HepG2 (cell line): ENCODE measurements at regions of chr17 and their contacts with region 1.

Region 1: GRCh38 chr17:7484067-7484918 is at the start of gene POLR2A:
- DNase-seq: peak; percentile 96
- ATAC-seq: peak; percentile 72
- H3K4me3 ChIP-seq: peak within 1 kb of the TSS; percentile 75 to 92 (median 90)
- H3K27ac ChIP-seq: peak within 1 kb of the TSS; percentile 100
- H3K4me1 ChIP-seq: peaks cover 65% of the 10 kb centered on the region
- H3K27me3 ChIP-seq: no peaks in the 10 kb centered on the region; a peak in 2 of 5 replicates
- CTCF ChIP-seq: no peak
- EP300 ChIP-seq: peak; percentile 44 to 51; a peak in 2 of 4 replicates
- POLR2A ChIP-seq: peak; percentile 100
- RAD21 ChIP-seq: peak; percentile 44; the same call in 1 of the 2 replicates
- total RNA-seq, gene POLR2A: 17.8 and 63.2 TPM in 2 replicates

Region 2: GRCh38 chr17:7435221-7435675 is 49.0 kb before region 1 on chr17 and contains the start of gene TMEM102:
- CTCF ChIA-PET with region 1: no interaction called
- POLR2A ChIA-PET with region 1: interaction called, 19 read pairs
- in situ Hi-C with region 1: loop called (anchors 5 kb)
- intact Hi-C with region 1: no loop called
- DNase-seq: peak; percentile 97
- ATAC-seq: peak; percentile 85
- H3K4me3 ChIP-seq: peak within 1 kb of the TSS; percentile 62 to 75 (median 72)
- H3K27ac ChIP-seq: peak within 1 kb of the TSS; percentile 13
- H3K4me1 ChIP-seq: peaks cover 24% of the 10 kb centered on the region
- H3K27me3 ChIP-seq: no peaks in the 10 kb centered on the region; a peak in 1 of 5 replicates
- CTCF ChIP-seq: 0 out of 2 replicates have a peak, but pooled peaks have one; percentile 6
- EP300 ChIP-seq: no peak
- POLR2A ChIP-seq: no peak
- RAD21 ChIP-seq: no peak
- total RNA-seq, gene TMEM102: 2.0 and 3.1 TPM in 2 replicates

Region 3: GRCh38 chr17:7444682-7445618 is 39.3 kb before region 1 on chr17 and contains the start of gene CHRNB1:
- CTCF ChIA-PET with region 1: no interaction called
- POLR2A ChIA-PET with region 1: interaction called, 21 read pairs
- in situ Hi-C with region 1: no loop called
- intact Hi-C with region 1: loop called (anchors 5 kb)
- DNase-seq: peak; percentile 85
- ATAC-seq: peak; percentile 87
- H3K4me3 ChIP-seq: peak within 1 kb of the TSS; percentile 62 to 85 (median 63)
- H3K27ac ChIP-seq: peak within 1 kb of the TSS; percentile 73
- H3K4me1 ChIP-seq: peaks cover 50% of the 10 kb centered on the region
- H3K27me3 ChIP-seq: peaks cover 6 to 27% of the 10 kb centered on the region in 2 experiments; a peak in 4 of 5 replicates
- CTCF ChIP-seq: peak; percentile 69
- EP300 ChIP-seq: 0 out of 4 replicates have a peak, but pooled peaks of 1 of the 2 experiments have one; percentile 3
- POLR2A ChIP-seq: peak in 1 of 2 experiments; percentile 76; a peak in 2 of 4 replicates
- RAD21 ChIP-seq: peak; percentile 43; the same call in 1 of the 2 replicates
- total RNA-seq, gene CHRNB1: 3.6 and 5.4 TPM in 2 replicates

Region 4: DNA sequence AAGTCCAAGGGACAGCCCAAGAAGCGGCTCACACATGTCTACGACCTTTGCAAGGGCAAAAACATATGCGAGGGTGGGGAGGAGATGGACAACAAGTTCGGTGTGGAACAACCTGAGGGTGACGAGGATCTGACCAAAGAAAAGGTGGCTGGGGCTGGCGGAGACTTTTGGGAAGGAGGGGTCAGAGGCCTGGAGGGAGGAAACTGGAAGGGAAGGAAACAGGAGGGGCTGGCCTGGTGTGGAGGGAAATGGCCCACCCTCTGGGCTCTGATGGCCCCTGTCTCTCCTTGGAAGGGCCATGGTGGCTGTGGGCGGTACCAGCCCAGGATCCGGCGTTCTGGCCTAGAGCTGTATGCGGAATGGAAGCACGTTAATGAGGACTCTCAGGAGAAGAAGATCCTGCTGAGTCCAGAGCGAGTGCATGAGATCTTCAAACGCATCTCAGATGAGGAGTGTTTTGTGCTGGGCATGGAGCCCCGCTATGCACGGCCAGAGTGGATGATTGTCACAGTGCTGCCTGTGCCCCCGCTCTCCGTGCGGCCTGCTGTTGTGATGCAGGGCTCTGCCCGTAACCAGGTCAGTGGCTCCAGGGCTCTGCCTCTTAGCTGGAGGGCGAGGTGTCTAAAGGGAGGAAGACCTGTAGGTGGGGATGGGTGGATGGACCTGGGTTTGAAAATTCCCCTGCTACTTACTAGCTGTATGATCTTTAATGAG is 12.3 kb after region 1 on chr17:
- CTCF ChIA-PET with region 1: no interaction called
- POLR2A ChIA-PET with region 1: interaction called, 12 read pairs
- in situ Hi-C with region 1: no loop called
- intact Hi-C with region 1: no loop called
- DNase-seq: no peak
- ATAC-seq: no peak; the same call in 2 of the 3 replicates
- H3K4me3 ChIP-seq: no peak overlapping the region
- H3K27ac ChIP-seq: no peak overlapping the region
- H3K4me1 ChIP-seq: peaks cover 13% of the 10 kb centered on the region
- H3K27me3 ChIP-seq: no peaks in the 10 kb centered on the region
- CTCF ChIP-seq: no peak
- EP300 ChIP-seq: no peak
- POLR2A ChIP-seq: no peak
- RAD21 ChIP-seq: no peak